Keratinocyte (primary cell): ENCODE measurements at regions of chr12 and their contacts with region 1.

Region 1: GRCh38 chr12:9619411-9620179 is 11.9 kb upstream of the KLRB1 start:
- DNase-seq: no peak
- H3K4me3 ChIP-seq: no peak overlapping the region
- H3K27ac ChIP-seq: no peak overlapping the region
- H3K4me1 ChIP-seq: no peaks in the 10 kb centered on the region
- H3K27me3 ChIP-seq: no peaks in the 10 kb centered on the region
- CTCF ChIP-seq: peak in 1 of 3 experiments; percentile 4

Region 2: GRCh38 chr12:9707864-9708808 is 88.5 kb after region 1 on chr12:
- dilution Hi-C with region 1: loop called (anchors 10 kb)
- DNase-seq: no peak
- H3K4me3 ChIP-seq: no peak overlapping the region
- H3K27ac ChIP-seq: no peak overlapping the region
- H3K4me1 ChIP-seq: no peaks in the 10 kb centered on the region
- H3K27me3 ChIP-seq: no peaks in the 10 kb centered on the region
- CTCF ChIP-seq: peak; percentile 73 to 85 (median 83)